ENCODE measurements at regions of chr1 and their contacts with region 1.

Region 1: DNA sequence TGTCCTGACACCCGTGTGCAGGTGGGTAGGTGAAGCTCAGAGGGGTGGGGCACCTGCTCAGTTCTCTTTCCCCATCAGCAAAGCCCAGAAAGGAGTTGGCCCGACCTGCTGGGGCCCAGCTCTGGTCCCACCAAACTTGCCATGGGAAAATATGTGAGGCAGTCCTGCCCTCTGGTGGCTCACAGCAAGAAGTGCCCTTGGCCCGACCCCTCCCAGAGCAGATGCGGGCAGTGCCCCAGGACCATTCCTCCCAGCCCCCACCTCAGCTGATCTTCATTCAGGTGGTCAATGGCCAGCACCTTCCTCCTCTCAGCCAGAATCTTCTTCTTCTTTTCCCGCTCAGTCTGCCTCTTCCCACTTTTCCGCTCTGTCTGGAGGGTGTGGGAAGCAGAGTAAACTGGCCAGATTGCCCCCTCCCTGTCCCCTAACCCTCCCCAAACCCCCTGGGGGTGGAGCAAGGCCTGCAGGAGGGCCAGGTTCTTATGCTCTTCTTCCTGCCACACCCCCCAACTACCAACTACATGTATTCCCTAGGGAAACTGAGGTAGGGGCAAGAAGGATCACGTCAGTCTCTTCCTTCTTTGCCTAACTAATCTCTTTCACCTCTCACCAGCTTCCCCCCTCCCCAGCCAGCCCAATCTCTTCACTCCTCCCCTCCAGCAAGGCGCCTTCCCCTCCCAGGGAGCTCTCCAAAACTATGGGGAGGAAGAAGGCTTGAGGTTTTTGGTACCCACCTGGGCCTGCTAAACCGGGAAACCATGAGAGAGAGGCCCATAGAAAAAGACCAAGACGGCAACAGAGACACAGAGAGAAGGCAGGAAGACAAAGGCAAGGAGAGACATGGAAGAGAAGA is 15.6 kb downstream of the TNNT2 start:
- DNase-seq: peak; percentile 49
- ATAC-seq: peak; percentile 40
- H3K4me3 Mint-ChIP-seq: no peak overlapping the region
- H3K27ac Mint-ChIP-seq: no peak overlapping the region
- H3K4me1 Mint-ChIP-seq: no peaks in the 10 kb centered on the region
- H3K27me3 Mint-ChIP-seq: peaks cover 3% of the 10 kb centered on the region

Region 2: GRCh38 chr1:201167041-201167991 is 194.6 kb before region 1 on chr1:
- CTCF ChIA-PET with region 1: no interaction called
- DNase-seq: no peak
- ATAC-seq: no peak
- H3K4me3 Mint-ChIP-seq: no peak overlapping the region
- H3K27ac Mint-ChIP-seq: no peak overlapping the region
- H3K4me1 Mint-ChIP-seq: peaks cover 5% of the 10 kb centered on the region
- H3K27me3 Mint-ChIP-seq: peaks cover 52% of the 10 kb centered on the region

Region 3: GRCh38 chr1:201254625-201255506 is 107.0 kb before region 1 on chr1:
- CTCF ChIA-PET with region 1: interaction called, 20 read pairs
- DNase-seq: peak; percentile 69
- ATAC-seq: peak; percentile 72
- H3K4me3 Mint-ChIP-seq: no peak overlapping the region
- H3K27ac Mint-ChIP-seq: no peak overlapping the region
- H3K4me1 Mint-ChIP-seq: no peaks in the 10 kb centered on the region
- H3K27me3 Mint-ChIP-seq: no peaks in the 10 kb centered on the region